GM12878 (cell line): ENCODE measurements at regions of chr16 and their contacts with region 1.

Region 1: DNA sequence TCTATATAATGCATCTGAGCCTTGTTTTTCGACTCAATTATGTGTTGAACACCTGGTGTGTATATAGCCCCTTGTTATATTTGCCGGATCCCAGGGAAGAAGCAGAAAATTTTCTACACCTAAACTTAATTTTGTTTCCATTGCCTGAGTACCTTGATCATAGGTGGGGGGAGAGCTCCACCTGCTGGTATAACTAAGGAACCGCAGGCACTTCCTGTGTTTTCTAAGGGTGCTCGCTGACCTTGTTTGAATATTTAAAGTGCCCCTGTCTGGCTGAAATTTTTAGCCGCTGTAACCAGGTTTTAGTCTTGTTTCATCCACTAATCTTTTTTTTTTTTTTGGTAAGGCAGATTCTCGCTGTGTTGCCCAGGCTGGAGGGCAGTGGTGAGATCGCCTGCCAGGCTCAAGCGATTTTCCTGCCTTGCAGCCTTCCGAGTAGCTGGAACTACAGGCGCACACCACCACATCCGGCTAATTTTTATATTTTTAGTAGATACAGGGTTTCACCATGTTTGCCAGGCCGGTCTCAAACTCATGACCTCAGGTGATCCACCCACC is 6.5 kb upstream of the NUBP1 start:
- DNase-seq: peak; percentile 65
- ATAC-seq: peak; percentile 45
- H3K4me3 ChIP-seq: peak overlapping the region; percentile 13; the same call in 1 of the 2 replicates
- H3K27ac ChIP-seq: peak overlapping the region; percentile 82
- H3K4me1 ChIP-seq: peaks cover 41% of the 10 kb centered on the region
- H3K27me3 ChIP-seq: no peaks in the 10 kb centered on the region
- CTCF ChIP-seq: peak; percentile 87 to 94 (median 90); a peak in 5 of 6 replicates
- EP300 ChIP-seq: no peak
- POLR2A ChIP-seq: no peak
- RAD21 ChIP-seq: peak; percentile 97

Region 2: GRCh38 chr16:9139965-9140364 is 1597.2 kb before region 1 on chr16:
- CTCF ChIA-PET with region 1: no interaction called
- POLR2A ChIA-PET with region 1: no interaction called
- RAD21 ChIA-PET with region 1: no interaction called
- SMC1A ChIA-PET with region 1: no interaction called
- in situ Hi-C with region 1: loop called (anchors 10 kb)
- intact Hi-C with region 1: no loop called
- DNase-seq: no peak
- ATAC-seq: peak; percentile 89
- H3K4me3 ChIP-seq: no peak overlapping the region
- H3K27ac ChIP-seq: no peak overlapping the region
- H3K4me1 ChIP-seq: peaks cover 11% of the 10 kb centered on the region
- H3K27me3 ChIP-seq: no peaks in the 10 kb centered on the region
- CTCF ChIP-seq: no peak
- EP300 ChIP-seq: no peak
- POLR2A ChIP-seq: no peak
- RAD21 ChIP-seq: no peak

Region 3: DNA sequence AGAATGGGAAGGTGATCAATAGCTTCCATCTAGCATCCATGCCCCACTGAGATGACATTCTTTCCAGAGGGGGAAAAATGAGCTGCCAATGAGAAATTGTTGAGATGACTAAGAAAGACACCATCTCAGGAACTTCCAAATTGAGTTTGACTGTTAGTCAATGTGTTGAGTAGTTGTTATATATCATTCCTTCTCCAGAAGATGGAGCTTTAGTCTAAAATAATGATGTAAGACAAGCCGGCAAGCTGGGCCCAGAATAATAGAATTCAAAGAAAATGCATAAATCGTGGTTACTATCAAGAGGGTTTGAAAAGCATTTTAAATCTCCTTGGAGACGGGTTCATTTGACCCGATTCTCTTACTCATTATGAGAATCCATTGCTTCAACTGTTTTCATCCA is 422.3 kb before region 1 on chr16:
- CTCF ChIA-PET with region 1: interaction called, 9 read pairs
- POLR2A ChIA-PET with region 1: no interaction called
- RAD21 ChIA-PET with region 1: interaction called, 13 read pairs
- SMC1A ChIA-PET with region 1: interaction called, 6 read pairs
- in situ Hi-C with region 1: loop called (anchors 5 kb)
- intact Hi-C with region 1: loop called (anchors 5 kb)
- DNase-seq: no peak
- ATAC-seq: peak; percentile 9; the same call in 1 of the 3 replicates
- H3K4me3 ChIP-seq: no peak overlapping the region
- H3K27ac ChIP-seq: no peak overlapping the region
- H3K4me1 ChIP-seq: peaks cover 13% of the 10 kb centered on the region
- H3K27me3 ChIP-seq: no peaks in the 10 kb centered on the region
- CTCF ChIP-seq: peak; percentile 9 to 52 (median 29); a peak in 4 of 6 replicates
- EP300 ChIP-seq: no peak
- POLR2A ChIP-seq: no peak
- RAD21 ChIP-seq: peak; percentile 63

Region 4: DNA sequence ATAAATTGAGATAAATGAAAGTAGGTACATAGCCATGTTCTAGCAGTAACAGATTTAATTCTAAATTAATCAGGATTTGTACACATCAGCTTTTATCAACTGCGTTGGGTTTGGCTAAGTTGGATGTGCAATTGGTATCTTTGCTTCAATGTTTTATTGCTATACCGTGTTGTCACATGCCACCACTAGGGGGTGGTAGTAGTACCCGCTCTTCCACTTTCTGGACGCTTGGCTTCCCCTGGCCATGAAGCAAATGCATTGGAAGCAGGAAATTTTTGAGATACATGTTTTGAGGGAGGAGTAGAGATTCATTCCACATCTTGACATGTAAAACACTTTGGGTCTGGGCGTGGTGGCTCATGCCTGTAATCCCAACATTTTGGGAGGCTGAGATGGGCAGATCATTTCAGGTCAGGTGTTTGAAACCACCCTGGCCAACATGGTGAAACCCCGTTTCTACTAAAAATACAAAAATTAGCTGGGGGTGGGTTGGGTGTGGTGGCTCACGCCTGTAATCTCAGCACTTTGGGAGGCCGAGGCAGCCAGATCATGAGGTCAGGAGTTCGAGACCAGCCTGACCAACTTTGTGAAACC is 215.4 kb before region 1 on chr16:
- CTCF ChIA-PET with region 1: interaction called, 191 read pairs
- POLR2A ChIA-PET with region 1: no interaction called
- RAD21 ChIA-PET with region 1: interaction called, 85 read pairs
- SMC1A ChIA-PET with region 1: interaction called, 104 read pairs
- in situ Hi-C with region 1: no loop called
- intact Hi-C with region 1: no loop called
- DNase-seq: no peak
- ATAC-seq: peak; percentile 91
- H3K4me3 ChIP-seq: no peak overlapping the region
- H3K27ac ChIP-seq: no peak overlapping the region
- H3K4me1 ChIP-seq: no peaks in the 10 kb centered on the region
- H3K27me3 ChIP-seq: no peaks in the 10 kb centered on the region
- CTCF ChIP-seq: peak; percentile 78 to 86 (median 81)
- EP300 ChIP-seq: no peak
- POLR2A ChIP-seq: no peak
- RAD21 ChIP-seq: peak; percentile 81

Region 5: DNA sequence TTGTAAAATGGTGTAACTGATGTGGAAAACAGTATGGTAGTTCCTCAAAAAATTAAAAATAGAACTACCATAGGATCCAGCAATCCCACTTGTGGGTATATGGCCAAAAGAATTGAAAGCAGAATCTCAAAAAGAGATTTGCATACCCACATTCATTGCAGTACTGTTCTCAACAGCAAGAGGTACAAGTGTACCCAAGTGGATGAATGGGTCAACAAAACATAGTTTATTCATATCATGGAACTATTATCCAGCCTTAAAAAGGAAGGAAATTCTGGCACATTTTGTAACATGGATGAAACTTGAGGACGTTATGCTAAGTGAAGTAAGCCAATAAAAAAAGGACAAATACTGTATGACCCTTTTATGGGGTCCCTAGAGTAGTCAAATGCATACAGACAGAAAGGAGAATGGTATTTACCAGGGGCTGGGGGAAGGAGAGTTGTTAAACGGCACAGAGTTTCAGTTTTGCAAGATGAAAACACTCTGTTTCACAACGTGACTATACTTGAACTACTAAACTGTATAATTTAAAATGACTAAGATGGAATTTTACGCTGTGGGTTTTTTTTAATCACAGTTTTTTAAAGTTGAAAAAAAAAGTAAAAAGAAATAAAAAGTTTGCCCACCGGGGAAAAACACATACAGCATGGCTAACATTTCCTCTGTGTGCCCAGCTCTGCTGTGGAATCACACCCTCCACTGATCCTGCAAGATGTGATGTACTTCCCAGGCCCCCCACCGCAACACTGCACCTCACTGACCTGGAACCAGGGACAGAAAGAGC is 75.4 kb after region 1 on chr16:
- CTCF ChIA-PET with region 1: interaction called, 5 read pairs
- POLR2A ChIA-PET with region 1: no interaction called
- RAD21 ChIA-PET with region 1: interaction called, 4 read pairs
- SMC1A ChIA-PET with region 1: interaction called, 5 read pairs
- in situ Hi-C with region 1: no loop called
- intact Hi-C with region 1: loop called (anchors 2 kb)
- DNase-seq: peak; percentile 57
- ATAC-seq: peak; percentile 90
- H3K4me3 ChIP-seq: no peak overlapping the region
- H3K27ac ChIP-seq: peak overlapping the region; percentile 84
- H3K4me1 ChIP-seq: peaks cover 43% of the 10 kb centered on the region
- H3K27me3 ChIP-seq: no peaks in the 10 kb centered on the region
- CTCF ChIP-seq: peak; percentile 8 to 25 (median 23); a peak in 3 of 6 replicates
- EP300 ChIP-seq: peak; percentile 70 to 96; a peak in 3 of 4 replicates
- POLR2A ChIP-seq: no peak
- RAD21 ChIP-seq: peak; percentile 17; the same call in 1 of the 2 replicates

Region 6: GRCh38 chr16:10888320-10888937 is 151.3 kb after region 1 on chr16:
- CTCF ChIA-PET with region 1: interaction called, 12 read pairs
- POLR2A ChIA-PET with region 1: interaction called, 8 read pairs
- RAD21 ChIA-PET with region 1: interaction called, 31 read pairs
- SMC1A ChIA-PET with region 1: interaction called, 38 read pairs
- in situ Hi-C with region 1: no loop called
- intact Hi-C with region 1: no loop called
- DNase-seq: no peak
- ATAC-seq: peak; percentile 7; the same call in 1 of the 3 replicates
- H3K4me3 ChIP-seq: peak overlapping the region; percentile 67
- H3K27ac ChIP-seq: peak overlapping the region; percentile 59
- H3K4me1 ChIP-seq: peaks cover 96% of the 10 kb centered on the region
- H3K27me3 ChIP-seq: no peaks in the 10 kb centered on the region
- CTCF ChIP-seq: no peak
- EP300 ChIP-seq: no peak; a peak in 1 of 4 replicates
- POLR2A ChIP-seq: no peak
- RAD21 ChIP-seq: 0 out of 2 replicates have a peak, but pooled peaks have one; percentile 17

Region 7: GRCh38 chr16:10918294-10919002 is 181.3 kb after region 1 on chr16:
- CTCF ChIA-PET with region 1: interaction called, 30 read pairs
- POLR2A ChIA-PET with region 1: no interaction called
- RAD21 ChIA-PET with region 1: interaction called, 40 read pairs
- SMC1A ChIA-PET with region 1: interaction called, 16 read pairs
- in situ Hi-C with region 1: loop called (anchors 5 kb)
- intact Hi-C with region 1: loop called (anchors 1 kb)
- DNase-seq: peak; percentile 77
- ATAC-seq: peak; percentile 89
- H3K4me3 ChIP-seq: no peak overlapping the region
- H3K27ac ChIP-seq: peak overlapping the region; percentile 4; the same call in 1 of the 2 replicates
- H3K4me1 ChIP-seq: peaks cover 25% of the 10 kb centered on the region
- H3K27me3 ChIP-seq: no peaks in the 10 kb centered on the region
- CTCF ChIP-seq: peak; percentile 91 to 99 (median 99)
- EP300 ChIP-seq: no peak
- POLR2A ChIP-seq: peak; percentile 50; the same call in 1 of the 2 replicates
- RAD21 ChIP-seq: peak; percentile 97